Caco-2 (cell line): ENCODE measurements at regions of chr4 and their contacts with region 1.

Region 1: DNA sequence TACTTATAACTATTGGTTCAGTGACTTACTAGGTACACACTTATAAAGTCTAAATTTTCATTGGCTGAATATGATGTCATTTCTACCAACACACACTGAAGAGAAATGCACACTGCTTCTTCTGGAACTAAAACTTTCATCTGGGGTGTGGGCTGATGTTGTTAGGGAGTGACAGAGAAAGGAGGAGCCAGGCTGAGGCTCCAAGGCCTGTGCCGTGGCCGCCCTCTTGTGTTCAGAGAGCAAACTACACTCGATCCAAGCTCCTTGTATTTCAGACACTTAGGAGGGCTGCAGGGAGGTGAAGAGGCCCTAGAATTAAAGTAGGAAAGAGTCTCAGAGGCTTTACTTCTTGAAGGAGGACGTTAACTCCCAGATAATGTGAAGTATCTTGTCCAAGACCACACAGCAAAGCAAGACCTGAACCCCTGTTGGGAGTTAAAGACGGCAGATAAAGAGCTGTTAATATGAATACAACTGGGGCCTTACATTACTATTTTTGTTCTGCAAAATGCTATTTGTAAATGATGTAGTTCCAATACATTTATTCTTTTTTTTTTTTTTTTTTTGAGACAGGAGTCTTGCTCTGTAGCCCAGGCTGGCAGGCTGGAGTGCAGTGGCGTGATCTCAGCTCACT is 137.5 kb downstream of the AFAP1 start:
- DNase-seq: peak; percentile 70 to 85
- H3K4me3 ChIP-seq: no peak overlapping the region
- H3K4me3 Mint-ChIP-seq: no peak overlapping the region
- H3K27ac Mint-ChIP-seq: no peak overlapping the region
- H3K4me1 ChIP-seq: peaks cover 18% of the 10 kb centered on the region
- H3K4me1 Mint-ChIP-seq: peaks cover 22% of the 10 kb centered on the region
- H3K27me3 ChIP-seq: no peaks in the 10 kb centered on the region
- H3K27me3 Mint-ChIP-seq: no peaks in the 10 kb centered on the region
- CTCF ChIP-seq: peak; percentile 85 to 89

Region 2: GRCh38 chr4:7761720-7762119 is 40.5 kb before region 1 on chr4:
- CTCF ChIA-PET with region 1: interaction called, 16 read pairs
- POLR2A ChIA-PET with region 1: no interaction called
- intact Hi-C with region 1: loop called (anchors 1 kb)
- DNase-seq: peak; percentile 62 to 72
- H3K4me3 ChIP-seq: no peak overlapping the region
- H3K4me3 Mint-ChIP-seq: no peak overlapping the region
- H3K27ac Mint-ChIP-seq: peak overlapping the region; percentile 42
- H3K4me1 ChIP-seq: peaks cover 17% of the 10 kb centered on the region
- H3K4me1 Mint-ChIP-seq: no peaks in the 10 kb centered on the region
- H3K27me3 ChIP-seq: no peaks in the 10 kb centered on the region
- H3K27me3 Mint-ChIP-seq: no peaks in the 10 kb centered on the region
- CTCF ChIP-seq: peak; percentile 61 to 67

Region 3: DNA sequence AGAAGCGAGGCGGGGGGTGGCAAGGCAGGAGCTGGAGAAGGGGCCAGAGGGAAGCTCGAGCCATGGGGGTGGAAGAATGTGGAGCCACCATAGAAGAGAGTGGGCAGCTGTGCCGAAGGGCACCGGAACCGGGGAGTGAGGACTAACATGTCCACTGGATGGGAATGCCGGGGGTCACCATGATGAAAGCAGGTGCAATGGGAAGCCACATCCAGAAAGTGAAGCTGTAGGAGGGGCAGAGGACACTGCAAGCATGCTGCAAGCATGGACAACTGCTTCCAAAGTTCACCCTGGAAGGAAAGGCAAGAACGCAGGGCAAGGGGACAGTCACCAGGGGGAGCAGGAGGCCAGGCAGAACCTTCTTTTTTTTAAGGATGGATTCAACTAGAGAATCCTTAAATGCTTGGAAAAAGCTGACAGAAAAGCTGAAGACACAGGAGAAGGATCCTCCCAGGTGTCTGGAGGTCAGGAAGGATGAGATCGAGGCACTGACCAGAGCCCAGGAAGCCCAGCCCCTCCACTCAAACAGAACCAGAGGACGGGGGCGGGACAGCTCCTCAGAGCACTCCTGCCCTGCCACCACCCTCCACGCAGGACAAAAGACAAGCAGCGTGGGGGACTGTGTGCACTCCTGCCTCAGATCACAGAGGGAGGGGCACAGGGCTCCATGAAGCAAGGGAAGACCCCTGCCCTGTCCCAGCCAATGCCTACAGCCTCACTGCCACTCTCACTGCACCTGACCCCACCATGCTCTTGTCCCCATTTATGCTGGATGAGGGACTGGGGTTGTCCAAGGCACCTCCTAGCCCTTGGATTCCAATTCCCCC is 31.8 kb before region 1 on chr4:
- CTCF ChIA-PET with region 1: interaction called, 19 read pairs
- POLR2A ChIA-PET with region 1: no interaction called
- intact Hi-C with region 1: loop called (anchors 1 kb)
- DNase-seq: peak; percentile 51 to 68
- H3K4me3 ChIP-seq: no peak overlapping the region
- H3K4me3 Mint-ChIP-seq: no peak overlapping the region
- H3K27ac Mint-ChIP-seq: peak overlapping the region; percentile 76
- H3K4me1 ChIP-seq: no peaks in the 10 kb centered on the region
- H3K4me1 Mint-ChIP-seq: peaks cover 24% of the 10 kb centered on the region
- H3K27me3 ChIP-seq: no peaks in the 10 kb centered on the region
- H3K27me3 Mint-ChIP-seq: no peaks in the 10 kb centered on the region
- CTCF ChIP-seq: peak; percentile 62 to 68

Region 4: DNA sequence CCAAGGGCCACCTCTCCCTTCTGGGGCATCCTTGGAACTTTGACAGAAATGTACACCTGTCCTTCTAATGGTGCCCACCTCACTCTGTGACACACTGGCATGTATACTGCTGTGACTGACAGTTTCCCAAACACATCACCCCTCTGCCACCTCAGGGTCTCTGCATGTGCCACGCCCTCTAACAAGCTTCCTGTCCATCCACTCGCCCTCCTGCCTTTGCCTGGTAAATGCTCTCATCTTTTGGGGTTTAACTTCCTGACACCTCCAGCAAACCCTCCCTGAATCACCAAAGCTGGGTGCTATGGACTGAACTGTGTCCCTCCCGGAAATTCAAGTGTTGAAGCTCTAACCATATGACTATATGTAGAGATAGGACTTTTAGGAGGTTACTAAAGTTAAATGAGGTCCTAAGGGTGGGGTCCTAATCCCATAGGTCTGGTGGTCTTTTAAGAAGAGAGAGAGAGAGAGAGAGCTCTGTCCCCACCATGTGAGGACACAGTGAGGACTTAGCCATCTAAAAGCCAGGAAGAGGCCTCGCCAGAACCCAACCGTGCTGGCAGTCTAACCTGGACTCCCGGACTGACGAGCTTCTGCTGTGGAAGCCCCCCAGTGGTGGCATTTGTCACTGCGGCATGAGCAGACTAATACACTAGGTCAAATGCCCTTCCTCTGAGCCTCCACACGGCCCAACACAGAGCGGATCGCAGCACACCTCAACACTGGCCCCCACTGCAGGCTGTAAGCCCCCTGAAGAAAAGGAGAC is 41.8 kb after region 1 on chr4:
- CTCF ChIA-PET with region 1: interaction called, 8 read pairs
- POLR2A ChIA-PET with region 1: no interaction called
- intact Hi-C with region 1: loop called (anchors 1 kb)
- DNase-seq: peak; percentile 73 to 79
- H3K4me3 ChIP-seq: no peak overlapping the region
- H3K4me3 Mint-ChIP-seq: no peak overlapping the region
- H3K27ac Mint-ChIP-seq: peak overlapping the region; percentile 25
- H3K4me1 ChIP-seq: peaks cover 6% of the 10 kb centered on the region; the same call in 1 of the 2 replicates
- H3K4me1 Mint-ChIP-seq: no peaks in the 10 kb centered on the region
- H3K27me3 ChIP-seq: no peaks in the 10 kb centered on the region
- H3K27me3 Mint-ChIP-seq: no peaks in the 10 kb centered on the region
- CTCF ChIP-seq: peak; percentile 66 to 71

Region 5: GRCh38 chr4:7857238-7857701 is 55.1 kb after region 1 on chr4:
- CTCF ChIA-PET with region 1: no interaction called
- POLR2A ChIA-PET with region 1: no interaction called
- intact Hi-C with region 1: no loop called
- DNase-seq: no peak
- H3K4me3 ChIP-seq: no peak overlapping the region
- H3K4me3 Mint-ChIP-seq: no peak overlapping the region
- H3K27ac Mint-ChIP-seq: no peak overlapping the region
- H3K4me1 ChIP-seq: peaks cover 38% of the 10 kb centered on the region
- H3K4me1 Mint-ChIP-seq: peaks cover 32% of the 10 kb centered on the region
- H3K27me3 ChIP-seq: no peaks in the 10 kb centered on the region
- H3K27me3 Mint-ChIP-seq: no peaks in the 10 kb centered on the region
- CTCF ChIP-seq: no peak

Region 6: GRCh38 chr4:7929118-7929951 is 127.1 kb after region 1 on chr4:
- CTCF ChIA-PET with region 1: interaction called, 3 read pairs
- POLR2A ChIA-PET with region 1: no interaction called
- intact Hi-C with region 1: loop called (anchors 1 kb)
- DNase-seq: peak; percentile 38 to 47
- H3K4me3 ChIP-seq: no peak overlapping the region
- H3K4me3 Mint-ChIP-seq: no peak overlapping the region
- H3K27ac Mint-ChIP-seq: no peak overlapping the region
- H3K4me1 ChIP-seq: no peaks in the 10 kb centered on the region
- H3K4me1 Mint-ChIP-seq: peaks cover 13% of the 10 kb centered on the region
- H3K27me3 ChIP-seq: no peaks in the 10 kb centered on the region
- H3K27me3 Mint-ChIP-seq: no peaks in the 10 kb centered on the region
- CTCF ChIP-seq: no peak

Region 7: DNA sequence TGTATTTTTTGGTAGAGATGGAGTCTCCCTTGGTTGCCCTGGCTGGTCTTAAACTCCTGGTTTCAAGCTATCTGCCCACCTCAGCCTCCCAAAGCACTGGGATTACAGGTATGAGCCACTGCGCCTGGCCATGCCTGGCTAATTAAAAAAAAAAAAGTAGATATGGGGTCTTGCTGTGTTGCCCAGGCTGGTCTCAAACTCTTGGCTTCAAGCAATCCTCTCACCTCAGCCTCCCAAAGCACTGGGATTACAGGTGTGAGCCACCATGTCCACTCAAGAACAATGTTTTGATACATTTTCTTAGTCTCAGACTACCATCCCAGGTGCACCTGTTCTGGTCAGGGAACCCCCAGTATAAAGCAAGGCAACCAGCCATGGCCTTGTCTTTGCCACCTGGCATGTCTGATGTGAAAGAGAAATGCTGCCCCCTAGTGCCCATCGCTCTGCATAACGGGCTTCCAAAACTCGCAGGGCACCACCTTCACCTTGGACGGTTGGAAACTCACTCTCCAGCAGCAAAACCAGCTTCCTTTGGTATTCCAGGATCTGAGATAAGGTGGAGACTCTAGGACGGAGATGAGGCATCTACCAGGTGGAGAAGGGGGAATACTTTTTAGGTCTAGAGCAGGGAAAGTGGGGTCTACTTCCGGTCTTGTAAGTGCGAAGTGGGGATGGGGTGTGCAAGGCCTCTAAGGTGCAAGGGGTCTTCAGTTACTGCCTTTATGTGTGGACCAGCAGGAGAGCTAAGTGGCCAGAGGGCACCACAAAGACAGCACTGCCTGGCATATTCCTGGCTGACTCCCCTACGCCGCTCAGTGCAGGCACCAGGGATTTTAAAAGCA is 185.2 kb after region 1 on chr4:
- CTCF ChIA-PET with region 1: interaction called, 21 read pairs
- POLR2A ChIA-PET with region 1: no interaction called
- intact Hi-C with region 1: loop called (anchors 1 kb)
- DNase-seq: peak; percentile 80 to 85
- H3K4me3 ChIP-seq: no peak overlapping the region
- H3K4me3 Mint-ChIP-seq: no peak overlapping the region
- H3K27ac Mint-ChIP-seq: no peak overlapping the region
- H3K4me1 ChIP-seq: 0 out of 2 replicates have a peak, but pooled peaks cover 4% of the 10 kb centered on the region
- H3K4me1 Mint-ChIP-seq: peaks cover 6% of the 10 kb centered on the region
- H3K27me3 ChIP-seq: no peaks in the 10 kb centered on the region
- H3K27me3 Mint-ChIP-seq: no peaks in the 10 kb centered on the region
- CTCF ChIP-seq: peak; percentile 72 to 88